OCI-LY7 (cell line): ENCODE measurements at regions of chrX and their contacts with region 1.

Region 1: DNA sequence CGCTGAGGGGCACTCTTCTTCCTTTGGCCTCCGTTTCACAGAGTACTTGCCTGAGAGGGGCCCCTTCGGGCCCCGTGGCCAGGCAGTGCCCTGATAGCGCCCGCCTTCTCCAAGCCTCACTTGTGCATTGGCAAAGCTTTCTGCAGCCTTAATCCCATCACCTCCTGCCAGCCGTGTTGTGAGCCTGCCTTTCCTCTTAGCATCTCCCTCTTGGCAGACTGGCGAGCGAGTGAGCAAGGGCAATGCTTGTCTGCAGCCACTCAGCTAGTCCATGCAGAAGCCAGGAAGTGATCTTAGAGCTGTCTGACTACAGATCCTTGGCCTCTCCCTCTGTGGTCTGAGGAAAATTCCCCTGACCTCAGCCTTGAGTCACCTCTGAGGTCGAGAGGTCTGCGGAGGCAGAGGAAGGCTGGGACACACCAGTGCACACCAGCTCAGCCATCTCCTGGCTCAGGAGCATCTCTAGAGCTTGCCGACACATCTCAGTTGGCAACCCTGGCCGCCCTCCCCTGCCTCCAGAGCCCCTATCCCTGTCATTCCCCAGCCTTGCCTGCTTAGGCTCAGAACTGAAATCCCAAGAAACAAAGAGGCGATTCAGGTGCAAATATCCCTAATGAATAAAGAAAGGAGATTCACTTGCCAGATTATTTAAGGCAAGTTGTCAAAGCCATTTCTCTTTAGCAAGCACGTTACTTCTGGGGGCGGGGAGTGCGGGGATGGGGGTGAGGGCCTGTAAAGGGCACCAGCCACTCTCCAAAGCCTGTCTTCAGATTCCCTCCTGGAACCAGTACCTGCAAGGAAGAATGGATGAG is 143.5 kb upstream of the MAMLD1 start:
- DNase-seq: no peak
- H3K4me3 ChIP-seq: no peak overlapping the region
- H3K27ac ChIP-seq: no peak overlapping the region
- H3K4me1 ChIP-seq: no peaks in the 10 kb centered on the region
- CTCF ChIP-seq: no peak

Region 2: DNA sequence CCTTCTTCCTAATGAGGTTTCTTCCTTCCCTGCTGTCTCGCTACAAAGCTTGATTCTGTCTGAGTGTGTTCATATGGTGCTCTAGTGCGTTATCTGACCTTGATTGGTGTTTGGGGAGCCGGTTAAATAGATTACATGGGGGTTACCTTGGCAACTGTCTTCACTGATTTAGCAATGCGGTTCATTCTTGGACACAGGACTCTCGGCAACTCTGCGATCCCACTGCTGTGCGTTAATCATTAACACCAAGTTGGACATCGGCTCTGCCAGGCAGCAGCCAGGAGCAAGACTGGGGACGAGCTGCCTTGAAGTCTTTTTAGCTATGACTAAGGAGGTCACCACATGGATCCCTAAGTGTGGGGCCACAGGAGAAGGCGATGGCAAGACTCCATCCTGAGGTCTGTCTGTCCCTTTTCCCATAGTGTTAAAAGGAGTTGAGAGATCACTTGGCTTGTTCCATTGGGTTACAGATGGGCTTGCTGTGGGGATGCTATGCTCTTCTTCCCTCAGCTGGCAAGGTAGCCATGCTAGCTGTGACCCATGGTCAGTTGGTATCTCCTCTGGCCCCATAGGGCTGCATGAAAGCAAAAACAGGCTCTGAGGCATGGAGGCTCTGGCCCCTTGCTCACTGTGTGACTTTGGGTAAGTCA is 50.1 kb after region 1 on chrX:
- CTCF ChIA-PET with region 1: interaction called, 11 read pairs
- POLR2A ChIA-PET with region 1: no interaction called
- intact Hi-C with region 1: no loop called
- DNase-seq: no peak
- H3K4me3 ChIP-seq: no peak overlapping the region
- H3K27ac ChIP-seq: no peak overlapping the region
- H3K4me1 ChIP-seq: no peaks in the 10 kb centered on the region
- CTCF ChIP-seq: no peak